ENCODE measurements at regions of chr10 and their contacts with region 1.

Region 1: DNA sequence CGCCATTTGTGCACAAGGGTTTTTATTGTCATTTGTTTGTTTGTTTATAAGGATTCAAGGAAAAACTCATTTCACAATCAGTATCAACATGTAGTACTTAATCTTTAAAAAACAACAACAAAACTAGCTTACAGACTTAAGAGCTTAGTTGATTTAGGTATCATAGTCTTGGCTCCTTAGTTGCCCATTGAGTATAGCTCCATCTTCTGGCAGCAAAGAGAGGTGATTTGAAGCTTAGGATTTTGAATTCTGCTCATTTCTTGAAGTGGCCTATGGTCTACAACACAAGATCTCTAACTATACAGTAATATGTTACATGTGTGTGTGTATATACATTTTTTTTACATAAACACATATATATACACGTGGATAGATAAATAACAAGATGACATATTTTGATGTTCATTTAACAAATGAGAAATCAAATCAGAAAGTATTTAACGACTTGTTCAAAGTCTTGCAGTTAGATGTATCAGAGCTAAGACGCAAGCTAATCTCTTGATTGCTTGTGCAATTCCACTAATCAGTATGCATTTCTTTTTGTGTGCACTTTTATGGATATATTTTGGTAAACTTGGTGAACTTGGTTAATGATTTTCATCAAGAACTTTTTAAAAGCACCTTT is 307.3 kb downstream of the CAMK1D start:
- DNase-seq: peak; percentile 6
- H3K4me3 Mint-ChIP-seq: no peak overlapping the region
- H3K27ac Mint-ChIP-seq: peak overlapping the region; percentile 34
- H3K4me1 Mint-ChIP-seq: peaks cover 34% of the 10 kb centered on the region
- H3K27me3 Mint-ChIP-seq: no peaks in the 10 kb centered on the region

Region 2: GRCh38 chr10:12214763-12215218 is 441.8 kb before region 1 on chr10:
- intact Hi-C with region 1: loop called (anchors 1 kb)
- DNase-seq: peak; percentile 15
- H3K4me3 Mint-ChIP-seq: peak overlapping the region; percentile 43
- H3K27ac Mint-ChIP-seq: peak overlapping the region; percentile 59
- H3K4me1 Mint-ChIP-seq: peaks cover 37% of the 10 kb centered on the region
- H3K27me3 Mint-ChIP-seq: no peaks in the 10 kb centered on the region

Region 3: DNA sequence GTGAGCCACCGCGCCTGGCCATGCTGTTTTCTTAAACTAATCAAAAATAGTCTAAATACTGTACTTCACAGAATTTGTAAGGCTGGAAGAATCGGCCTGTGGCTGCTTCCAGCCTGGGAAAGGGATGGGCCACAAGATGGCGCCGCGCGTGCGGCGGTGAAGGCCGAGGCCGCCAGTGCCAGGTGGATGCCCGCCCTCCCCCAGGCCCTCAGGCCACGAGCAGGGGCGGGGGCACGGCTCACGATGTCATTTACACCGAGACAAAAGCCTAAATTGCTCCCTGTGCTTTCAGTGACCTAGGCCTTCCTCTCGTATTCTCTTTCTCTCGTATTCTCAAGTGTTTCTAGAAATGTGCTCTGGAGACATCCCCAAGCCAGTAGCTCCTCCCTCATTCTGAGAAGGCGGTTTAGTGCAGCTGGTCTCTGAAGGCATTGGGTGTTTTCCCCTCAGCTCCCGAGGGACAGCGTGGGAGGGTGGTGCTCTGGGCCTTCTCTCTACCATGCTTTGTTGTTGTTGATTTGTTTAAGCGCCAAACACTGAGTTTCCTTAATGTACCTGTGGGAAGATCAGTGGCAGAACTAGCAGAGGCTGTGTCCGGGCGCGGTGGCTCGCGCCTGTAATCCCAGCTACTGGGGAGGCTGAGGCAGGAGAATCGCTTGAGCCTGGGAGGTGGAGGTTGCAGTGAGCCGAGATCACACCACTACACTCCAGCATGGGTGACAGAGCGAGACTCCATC is 392.3 kb before region 1 on chr10:
- intact Hi-C with region 1: loop called (anchors 1 kb)
- DNase-seq: peak; percentile 63
- H3K4me3 Mint-ChIP-seq: peak overlapping the region; percentile 82
- H3K27ac Mint-ChIP-seq: peak overlapping the region; percentile 98
- H3K4me1 Mint-ChIP-seq: peaks cover 23% of the 10 kb centered on the region
- H3K27me3 Mint-ChIP-seq: peaks cover 1% of the 10 kb centered on the region

Region 4: DNA sequence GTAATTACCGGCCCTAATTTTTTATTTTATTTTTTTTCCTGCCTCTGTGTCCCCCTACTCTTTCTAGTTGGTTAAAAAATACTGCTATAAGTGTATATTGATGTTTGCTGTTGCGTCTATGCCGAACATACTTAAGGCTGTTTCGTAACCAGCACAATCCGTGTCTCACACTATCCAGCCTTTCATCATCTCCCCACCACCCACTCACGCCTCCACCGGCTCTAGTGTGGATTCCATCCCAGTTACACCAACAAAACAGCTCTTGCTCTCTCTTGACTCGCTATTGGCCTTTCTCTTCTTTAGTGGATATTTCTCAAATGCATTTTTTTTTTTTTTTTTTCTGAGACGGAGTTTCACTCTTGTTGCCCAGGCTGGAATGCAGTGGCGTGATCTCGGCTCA is 377.3 kb before region 1 on chr10:
- intact Hi-C with region 1: no loop called
- DNase-seq: no peak
- H3K4me3 Mint-ChIP-seq: no peak overlapping the region
- H3K27ac Mint-ChIP-seq: no peak overlapping the region
- H3K4me1 Mint-ChIP-seq: no peaks in the 10 kb centered on the region
- H3K27me3 Mint-ChIP-seq: no peaks in the 10 kb centered on the region

Region 5: DNA sequence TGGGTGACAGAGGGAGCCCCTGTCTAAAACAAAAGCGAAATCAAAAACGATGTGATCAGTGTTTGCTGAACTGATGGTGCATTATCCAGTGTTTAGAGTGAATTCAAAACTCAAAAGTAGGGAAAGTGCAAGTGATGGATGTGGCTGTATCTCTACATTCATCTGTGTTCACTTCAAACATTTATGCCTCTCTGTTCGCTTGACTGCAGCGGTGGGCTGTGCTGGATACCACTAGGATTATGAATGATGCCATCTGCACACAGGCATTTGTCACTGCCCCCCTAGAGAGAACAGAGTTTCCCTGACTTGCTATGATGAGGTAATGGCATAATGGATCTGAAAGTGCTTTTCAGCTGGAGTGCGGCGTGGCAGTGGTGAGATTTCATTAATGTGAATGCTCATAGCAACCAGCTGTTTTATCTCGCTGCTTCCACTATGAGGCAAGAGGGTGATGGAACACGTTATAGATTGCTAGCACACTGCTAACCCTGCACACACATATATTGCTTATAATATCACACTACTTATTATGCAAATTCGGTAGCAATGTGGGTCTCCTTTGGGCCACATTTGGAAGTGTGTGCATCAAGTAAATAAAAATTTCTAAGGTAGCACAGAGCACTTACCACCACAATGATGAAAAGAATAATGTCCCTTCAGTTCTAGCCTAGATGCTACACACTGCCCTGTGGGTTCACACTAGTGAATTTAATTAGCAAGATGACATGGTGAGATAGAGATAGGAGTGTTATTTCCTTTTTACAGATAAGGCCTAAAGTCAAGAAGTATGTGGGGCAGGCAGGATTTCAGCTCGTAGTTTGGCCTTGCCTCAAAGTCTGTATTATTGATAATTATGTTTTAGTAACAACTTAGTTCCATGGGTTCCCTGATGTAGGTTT is 142.6 kb before region 1 on chr10:
- intact Hi-C with region 1: loop called (anchors 5 kb)
- DNase-seq: no peak
- H3K4me3 Mint-ChIP-seq: no peak overlapping the region
- H3K27ac Mint-ChIP-seq: no peak overlapping the region
- H3K4me1 Mint-ChIP-seq: peaks cover 24% of the 10 kb centered on the region
- H3K27me3 Mint-ChIP-seq: peaks cover 2% of the 10 kb centered on the region

Region 6: DNA sequence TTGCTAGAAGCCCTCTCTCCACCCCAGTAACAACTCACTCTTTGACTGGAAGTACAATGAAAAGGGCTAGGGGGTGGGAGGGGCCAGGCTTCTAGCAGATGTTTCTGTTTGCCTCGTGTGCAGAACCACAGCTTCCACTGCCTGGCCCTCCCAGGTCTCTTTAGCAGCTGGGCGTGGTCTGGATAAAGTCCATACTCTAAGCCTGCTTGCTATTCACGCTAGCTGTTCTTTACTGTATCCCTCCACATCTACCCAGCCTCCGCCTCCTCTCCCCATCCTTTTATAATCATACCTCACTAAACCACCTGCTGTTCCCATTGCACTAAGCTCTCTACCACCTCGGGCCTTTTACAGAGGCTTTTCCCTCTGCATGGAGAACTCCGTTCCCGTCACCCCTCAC is 18.5 kb before region 1 on chr10:
- intact Hi-C with region 1: loop called (anchors 2 kb)
- DNase-seq: peak; percentile 49
- H3K4me3 Mint-ChIP-seq: peak overlapping the region; percentile 24
- H3K27ac Mint-ChIP-seq: peak overlapping the region; percentile 64
- H3K4me1 Mint-ChIP-seq: peaks cover 61% of the 10 kb centered on the region
- H3K27me3 Mint-ChIP-seq: peaks cover 2% of the 10 kb centered on the region

Region 7: GRCh38 chr10:12690525-12691126 is 34.0 kb after region 1 on chr10:
- intact Hi-C with region 1: no loop called
- DNase-seq: no peak
- H3K4me3 Mint-ChIP-seq: no peak overlapping the region
- H3K27ac Mint-ChIP-seq: peak overlapping the region; percentile 71
- H3K4me1 Mint-ChIP-seq: peaks cover 13% of the 10 kb centered on the region
- H3K27me3 Mint-ChIP-seq: no peaks in the 10 kb centered on the region